Dorsolateral prefrontal cortex (tissue), 120 donors: ENCODE measurements at regions of chr12 and their contacts with region 1.

Region 1: DNA sequence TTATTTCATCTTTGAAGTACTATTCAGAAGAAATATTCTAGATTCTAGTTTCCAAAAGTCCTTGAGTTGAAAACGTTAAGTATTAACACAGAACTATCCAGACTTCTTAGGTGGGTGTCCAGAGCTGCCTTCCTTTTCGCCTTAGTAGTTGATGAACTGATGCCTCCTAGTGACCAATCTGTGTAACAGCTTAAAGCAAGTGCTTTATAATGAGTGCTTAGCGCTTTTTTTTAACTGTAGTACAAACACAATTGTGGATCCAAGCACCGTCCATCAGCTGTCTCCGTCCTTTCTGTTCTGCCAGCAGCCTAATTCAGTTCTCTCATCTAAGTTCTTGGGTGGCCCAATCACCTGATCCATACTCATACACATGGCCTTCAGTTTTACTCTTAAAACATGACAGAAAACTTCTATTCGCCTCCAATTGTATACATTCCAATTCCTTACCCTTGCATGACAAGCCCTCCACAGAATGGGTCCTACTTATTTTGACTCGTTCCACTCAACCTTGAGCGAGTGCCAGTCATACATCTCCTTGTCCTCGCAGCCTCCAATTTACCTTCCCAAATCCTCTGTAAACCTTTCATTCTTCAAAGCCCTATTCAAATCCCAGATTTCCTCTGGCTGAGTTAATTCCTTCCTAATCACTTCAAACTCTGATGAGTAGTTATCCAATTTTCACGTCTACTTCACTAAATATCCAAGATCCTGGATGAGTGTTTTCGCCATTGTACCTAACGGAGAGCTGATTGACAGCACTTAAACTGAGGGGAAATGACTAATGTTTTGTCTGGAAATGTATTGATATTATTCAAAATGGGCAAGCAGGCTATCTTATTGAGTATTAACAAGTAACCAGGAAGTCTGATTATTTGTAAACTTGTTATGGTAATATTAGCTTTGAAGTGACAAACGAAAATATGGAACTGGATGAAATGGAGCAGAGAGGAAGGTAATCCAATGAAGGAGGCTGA is 5.8 kb upstream of the PHLDA1 start:
- DNase-seq: peak in 1 of 10 donors; percentile 28
- H3K4me3 ChIP-seq: peak overlapping the region in 2 of 59 donors; percentile 4 to 5
- H3K27ac ChIP-seq: peak overlapping the region in 4 of 59 donors; percentile 1 to 33 (median 18)
- H3K27me3 ChIP-seq: no peaks in the 10 kb centered on the region
- CTCF ChIP-seq: peak; percentile 49 to 93 (median 84)

Region 2: DNA sequence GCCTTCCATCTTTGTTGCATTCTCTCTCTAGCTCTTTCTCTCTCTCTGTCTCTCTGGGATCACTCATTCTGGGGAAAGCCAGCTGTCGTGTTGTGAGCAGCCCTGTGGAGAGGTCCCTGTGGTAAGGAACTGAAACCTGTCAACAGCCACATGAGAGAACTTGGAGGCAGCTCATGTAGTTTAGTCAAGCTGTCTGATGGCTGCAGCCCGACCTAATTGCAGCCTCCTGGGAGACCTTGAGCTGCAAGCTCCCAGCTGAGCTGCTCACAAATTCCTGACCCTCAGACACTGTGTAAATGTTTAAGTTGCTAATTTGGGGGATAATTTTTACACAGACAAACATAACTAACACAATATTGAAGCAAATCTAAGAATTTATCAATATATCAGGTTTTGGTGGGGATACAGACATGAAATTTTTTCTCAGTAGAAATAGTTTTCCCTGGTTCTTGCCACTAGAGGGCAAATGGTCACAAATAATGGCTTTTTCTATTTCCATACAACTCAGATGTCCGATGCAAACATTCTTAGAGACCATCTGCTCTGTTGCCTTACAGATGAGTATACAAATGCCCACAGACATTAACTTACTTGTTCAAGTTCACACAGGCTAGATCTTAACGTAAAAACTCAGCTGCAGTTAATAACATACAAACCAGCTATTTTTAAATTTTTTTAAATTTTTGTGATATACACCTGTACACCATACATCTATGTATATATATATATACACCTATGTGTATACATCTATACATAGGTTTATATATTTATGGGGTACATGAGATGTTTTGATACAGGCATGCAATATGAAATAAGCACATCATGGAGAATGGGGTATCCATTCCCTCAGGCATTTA is 510.5 kb before region 1 on chr12:
- intact Hi-C with region 1: loop called (anchors 1 to 5 kb)
- DNase-seq: peak in 1 of 10 donors; percentile 4
- H3K4me3 ChIP-seq: no peak overlapping the region
- H3K27ac ChIP-seq: no peak overlapping the region
- H3K27me3 ChIP-seq: no peaks in the 10 kb centered on the region
- CTCF ChIP-seq: peak; percentile 57 to 90 (median 77)

Region 3: DNA sequence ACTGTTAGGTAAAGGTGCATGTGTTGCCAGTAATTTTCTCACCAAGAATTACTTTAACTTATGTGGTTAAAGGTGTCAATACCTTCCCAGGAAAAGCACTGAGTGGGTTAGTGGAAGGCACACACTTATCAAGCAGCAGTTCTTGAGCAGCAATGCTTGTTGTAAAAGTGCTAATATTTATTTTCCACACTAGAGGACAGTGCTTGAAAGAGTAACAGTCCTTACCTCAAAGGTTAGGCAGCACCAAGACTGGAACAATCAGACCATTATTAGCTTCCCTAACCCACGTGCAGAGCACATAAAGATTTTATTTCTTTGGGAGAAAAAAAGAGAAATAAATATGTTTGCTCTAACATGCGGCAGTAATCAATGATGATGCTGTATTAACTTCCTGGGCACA is 477.2 kb before region 1 on chr12:
- intact Hi-C with region 1: loop called in 1 of 2 experiments (anchors 5 kb)
- DNase-seq: no peak
- H3K4me3 ChIP-seq: peak overlapping the region in 1 of 59 donors; percentile 17
- H3K27ac ChIP-seq: no peak overlapping the region
- H3K27me3 ChIP-seq: no peaks in the 10 kb centered on the region
- CTCF ChIP-seq: peak in 52 of 56 donors; percentile 15 to 70 (median 50)

Region 4: GRCh38 chr12:76083904-76084862 is 46.8 kb after region 1 on chr12 and contains the start of gene NAP1L1:
- intact Hi-C with region 1: loop called (anchors 2 to 5 kb)
- DNase-seq: peak; percentile 97 to 99 (median 98)
- H3K4me3 ChIP-seq: peak within 1 kb of the TSS; percentile 57 to 99 (median 90)
- H3K27ac ChIP-seq: peak within 1 kb of the TSS; percentile 73 to 99 (median 97)
- H3K27me3 ChIP-seq: no peaks in the 10 kb centered on the region
- CTCF ChIP-seq: peak in 14 of 56 donors; percentile 4 to 32 (median 11)
- total RNA-seq, gene NAP1L1: 291 to 450 (median 373) TPM